ENCODE measurements at regions of chr7 and their contacts with region 1.

Region 1: GRCh38 chr7:73894733-73895551 is 34.0 kb downstream of the TMEM270 start:
- DNase-seq: peak; percentile 92 to 99
- H3K4me3 ChIP-seq: no peak overlapping the region
- H3K27ac ChIP-seq: peak overlapping the region; percentile 97
- H3K4me1 ChIP-seq: peaks cover 21 to 51% of the 10 kb centered on the region in 2 donors
- H3K27me3 ChIP-seq: no peaks in the 10 kb centered on the region
- CTCF ChIP-seq: peak in 2 of 3 experiments; percentile 25 to 42

Region 2: GRCh38 chr7:73879977-73880681 is 14.8 kb before region 1 on chr7:
- intact Hi-C with region 1: no loop called
- DNase-seq: peak in 1 of 2 donors; percentile 88
- H3K4me3 ChIP-seq: peak overlapping the region in 1 of 2 donors; percentile 18
- H3K27ac ChIP-seq: peak overlapping the region; percentile 90 to 91
- H3K4me1 ChIP-seq: peaks cover 28 to 38% of the 10 kb centered on the region in 2 donors
- H3K27me3 ChIP-seq: no peaks in the 10 kb centered on the region
- CTCF ChIP-seq: no peak

Region 3: GRCh38 chr7:73971704-73972341 is 76.9 kb after region 1 on chr7:
- intact Hi-C with region 1: loop called (anchors 2 kb)
- DNase-seq: peak in 1 of 2 donors; percentile 57
- H3K4me3 ChIP-seq: no peak overlapping the region
- H3K27ac ChIP-seq: peak overlapping the region in 1 of 2 donors; percentile 58
- H3K4me1 ChIP-seq: peaks cover 16 to 52% of the 10 kb centered on the region in 2 donors
- H3K27me3 ChIP-seq: no peaks in the 10 kb centered on the region
- CTCF ChIP-seq: peak in 1 of 3 experiments; percentile 15

Region 4: GRCh38 chr7:73992101-73992562 is 97.2 kb after region 1 on chr7:
- intact Hi-C with region 1: loop called (anchors 2 kb)
- DNase-seq: peak; percentile 82 to 97
- H3K4me3 ChIP-seq: no peak overlapping the region
- H3K27ac ChIP-seq: peak overlapping the region; percentile 94
- H3K4me1 ChIP-seq: peaks cover 12 to 65% of the 10 kb centered on the region in 2 donors
- H3K27me3 ChIP-seq: no peaks in the 10 kb centered on the region
- CTCF ChIP-seq: no peak

Region 5: DNA sequence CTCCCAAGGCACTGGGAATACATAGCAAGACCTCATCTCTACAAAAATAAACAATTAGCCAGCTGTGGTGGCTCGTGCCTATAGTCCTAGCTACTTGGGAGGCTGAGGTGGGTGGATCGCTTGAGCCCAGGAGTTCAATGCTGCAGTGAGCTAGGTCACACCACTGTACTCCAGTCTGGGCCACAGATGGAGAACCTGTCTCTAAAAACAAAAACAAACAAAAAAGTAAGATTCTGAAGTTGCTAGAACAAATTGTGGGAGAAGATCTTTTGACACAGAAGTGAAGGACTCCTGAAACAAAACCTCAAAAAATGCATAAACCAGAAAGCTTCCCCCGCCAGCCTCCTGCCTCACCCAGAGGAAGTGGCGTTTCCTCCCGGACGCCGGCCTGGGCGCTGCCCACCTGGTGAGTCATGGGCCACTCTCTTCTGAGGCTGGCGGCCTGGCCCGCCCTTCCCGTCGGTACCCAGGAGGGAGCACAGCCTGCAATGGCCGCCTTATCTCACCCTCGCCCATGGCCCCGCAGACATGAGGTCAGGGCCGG is 107.6 kb after region 1 on chr7:
- intact Hi-C with region 1: loop called (anchors 2 kb)
- DNase-seq: peak; percentile 68 to 94
- H3K4me3 ChIP-seq: peak overlapping the region; percentile 20 to 29
- H3K27ac ChIP-seq: peak overlapping the region; percentile 95 to 99
- H3K4me1 ChIP-seq: peaks cover 22 to 63% of the 10 kb centered on the region in 2 donors
- H3K27me3 ChIP-seq: no peaks in the 10 kb centered on the region
- CTCF ChIP-seq: no peak

Measured in ascending aorta (tissue), 2 donors.